CD4-positive, alpha-beta memory T cell (primary cell): ENCODE measurements at regions of chrX and their contacts with region 1.

Region 1: GRCh38 chrX:109709129-109709631 is 23.9 kb downstream of the ACSL4 start:
- DNase-seq: no peak
- H3K4me3 ChIP-seq: no peak overlapping the region
- H3K4me3 Mint-ChIP-seq: peak overlapping the region in 5 of 8 donors; percentile 8 to 65 (median 47)
- H3K27ac ChIP-seq: no peak overlapping the region
- H3K27ac Mint-ChIP-seq: peak overlapping the region in 3 of 7 donors; percentile 5 to 69 (median 61)
- H3K4me1 ChIP-seq: peaks cover 26% of the 10 kb centered on the region
- H3K4me1 Mint-ChIP-seq: peaks cover 25 to 57% (median 41%) of the 10 kb centered on the region in 4 donors
- H3K27me3 ChIP-seq: no peaks in the 10 kb centered on the region
- H3K27me3 Mint-ChIP-seq: no peaks in the 10 kb centered on the region

Region 2: GRCh38 chrX:108772549-108772948 is 936.6 kb before region 1 on chrX:
- CTCF ChIA-PET with region 1: no interaction called
- POLR2A ChIA-PET with region 1: no interaction called
- intact Hi-C with region 1: no loop called
- DNase-seq: no peak
- H3K4me3 ChIP-seq: no peak overlapping the region
- H3K4me3 Mint-ChIP-seq: no peak overlapping the region
- H3K27ac ChIP-seq: no peak overlapping the region
- H3K27ac Mint-ChIP-seq: no peak overlapping the region
- H3K4me1 ChIP-seq: no peaks in the 10 kb centered on the region
- H3K4me1 Mint-ChIP-seq: no peaks in the 10 kb centered on the region
- H3K27me3 ChIP-seq: no peaks in the 10 kb centered on the region
- H3K27me3 Mint-ChIP-seq: no peaks in the 10 kb centered on the region

Region 3: DNA sequence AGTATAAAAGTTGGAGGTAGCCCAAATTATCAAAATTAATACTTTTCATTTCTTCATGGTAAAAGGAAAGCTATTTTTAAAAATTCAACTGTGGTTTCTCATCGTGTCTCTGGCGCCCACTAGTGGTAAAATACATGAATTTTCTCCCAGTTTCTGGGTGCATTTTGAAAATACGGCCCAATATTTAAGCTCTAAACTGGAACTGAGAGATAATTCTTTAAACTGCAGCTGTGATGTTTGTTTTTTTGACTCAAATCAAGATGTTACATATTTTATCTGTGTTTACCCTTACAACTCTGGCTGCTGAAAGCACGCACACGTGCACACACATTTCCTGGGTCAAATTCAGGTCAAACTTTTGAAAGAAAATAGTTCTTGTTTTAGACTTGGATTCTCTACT is 147.8 kb after region 1 on chrX:
- CTCF ChIA-PET with region 1: interaction called, 184 read pairs
- POLR2A ChIA-PET with region 1: interaction called, 3 read pairs
- intact Hi-C with region 1: no loop called
- DNase-seq: peak; percentile 31 to 46 (median 37)
- H3K4me3 ChIP-seq: no peak overlapping the region
- H3K4me3 Mint-ChIP-seq: peak overlapping the region in 1 of 8 donors; percentile 20
- H3K27ac ChIP-seq: no peak overlapping the region
- H3K27ac Mint-ChIP-seq: no peak overlapping the region
- H3K4me1 ChIP-seq: no peaks in the 10 kb centered on the region
- H3K4me1 Mint-ChIP-seq: peaks cover 0 to 3% (median 0%) of the 10 kb centered on the region in 4 donors
- H3K27me3 ChIP-seq: no peaks in the 10 kb centered on the region
- H3K27me3 Mint-ChIP-seq: no peaks in the 10 kb centered on the region